ENCODE measurements at regions of chr7 and their contacts with region 1.

Region 1: DNA sequence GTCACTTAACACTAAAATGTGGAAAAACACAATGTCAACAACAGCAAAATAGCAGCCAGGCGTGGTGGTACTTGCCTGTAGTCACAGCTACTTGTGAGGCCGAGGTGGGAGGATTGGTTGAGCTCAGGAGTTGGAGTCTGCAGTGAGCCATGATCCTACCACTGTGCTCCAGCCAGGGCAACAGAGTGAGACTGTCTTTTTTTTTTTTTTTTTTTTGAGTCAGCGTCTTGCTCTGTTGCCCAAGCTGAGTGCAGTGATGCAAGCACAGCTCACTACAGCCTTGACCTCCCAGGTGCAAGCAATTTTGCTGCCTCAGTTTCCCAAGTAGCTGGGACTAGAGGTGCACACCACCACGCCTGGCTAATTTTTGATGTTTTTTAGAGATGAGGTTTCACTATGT is 6.1 kb downstream of the KCTD7 start:
- DNase-seq: no peak
- ATAC-seq: no peak
- H3K4me3 ChIP-seq: no peak overlapping the region
- H3K27ac ChIP-seq: no peak overlapping the region
- H3K4me1 ChIP-seq: peaks cover 15 to 21% of the 10 kb centered on the region in 2 experiments
- H3K27me3 ChIP-seq: no peaks in the 10 kb centered on the region
- CTCF ChIP-seq: no peak
- EP300 ChIP-seq: no peak
- POLR2A ChIP-seq: no peak
- RAD21 ChIP-seq: no peak

Region 2: GRCh38 chr7:66671034-66671433 is 36.2 kb after region 1 on chr7:
- CTCF ChIA-PET with region 1: no interaction called
- POLR2A ChIA-PET with region 1: no interaction called
- in situ Hi-C with region 1: loop called (anchors 5 kb)
- intact Hi-C with region 1: no loop called
- DNase-seq: no peak
- ATAC-seq: no peak; the same call in 2 of the 3 replicates
- H3K4me3 ChIP-seq: no peak overlapping the region
- H3K27ac ChIP-seq: no peak overlapping the region
- H3K4me1 ChIP-seq: peaks cover 14% of the 10 kb centered on the region in 2 experiments; a peak in 4 of 5 replicates
- H3K27me3 ChIP-seq: no peaks in the 10 kb centered on the region
- CTCF ChIP-seq: no peak
- EP300 ChIP-seq: no peak
- POLR2A ChIP-seq: no peak
- RAD21 ChIP-seq: no peak